ENCODE measurements at regions of chr5 and their contacts with region 1.

Region 1: GRCh38 chr5:154445422-154446182 is at the start of gene SAP30L:
- DNase-seq: peak; percentile 96
- H3K4me3 ChIP-seq: peak within 1 kb of the TSS; percentile 78
- H3K27ac ChIP-seq: peak within 1 kb of the TSS; percentile 18
- H3K4me1 ChIP-seq: peaks cover 15% of the 10 kb centered on the region
- CTCF ChIP-seq: no peak
- total RNA-seq, gene SAP30L: 33.2 and 38.7 TPM in 2 replicates

Region 2: DNA sequence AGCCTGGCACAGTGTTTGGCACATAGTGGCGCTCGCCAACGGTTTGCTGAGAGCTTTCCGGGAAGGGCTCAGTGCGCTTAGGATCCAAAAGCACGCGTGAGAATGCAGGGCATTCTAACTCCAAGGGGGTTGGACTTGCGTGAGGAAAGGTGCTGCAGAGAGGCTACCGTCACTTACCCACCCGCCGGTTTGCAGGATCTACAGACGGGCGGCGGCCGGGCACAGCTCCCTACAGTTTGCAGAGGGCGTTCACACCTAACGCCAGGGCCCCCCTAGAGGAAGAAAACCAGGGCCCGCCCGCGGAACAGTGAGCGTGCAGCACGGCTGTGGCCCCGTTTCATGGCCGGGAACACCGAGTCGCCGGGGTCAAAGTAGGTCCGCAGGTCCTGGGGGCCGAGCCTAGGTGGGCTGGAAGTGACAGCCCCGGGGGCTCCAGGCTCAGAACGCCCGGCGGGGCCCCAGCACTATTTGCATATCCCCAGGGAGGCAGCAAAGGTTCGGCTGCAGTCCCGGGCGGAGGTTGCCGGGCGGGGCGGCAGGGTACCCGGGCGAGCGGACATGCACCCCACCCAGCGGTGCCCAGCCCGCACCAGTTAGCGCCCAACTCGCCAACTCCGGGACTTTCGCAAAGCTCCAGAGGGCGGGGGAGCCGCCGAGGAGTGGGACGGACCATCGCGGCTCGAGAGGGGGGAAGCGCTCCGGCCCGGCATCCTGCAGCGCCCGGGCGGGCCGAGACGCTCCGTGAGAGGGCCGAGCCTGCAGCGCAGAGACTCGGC is 255.6 kb before region 1 on chr5:
- CTCF ChIA-PET with region 1: interaction called, 3 read pairs
- POLR2A ChIA-PET with region 1: no interaction called
- intact Hi-C with region 1: loop called (anchors 1 kb)
- DNase-seq: peak; percentile 90
- H3K4me3 ChIP-seq: peak overlapping the region; percentile 83
- H3K27ac ChIP-seq: peak overlapping the region; percentile 75
- H3K4me1 ChIP-seq: peaks cover 25% of the 10 kb centered on the region
- CTCF ChIP-seq: peak; percentile 73

Region 3: DNA sequence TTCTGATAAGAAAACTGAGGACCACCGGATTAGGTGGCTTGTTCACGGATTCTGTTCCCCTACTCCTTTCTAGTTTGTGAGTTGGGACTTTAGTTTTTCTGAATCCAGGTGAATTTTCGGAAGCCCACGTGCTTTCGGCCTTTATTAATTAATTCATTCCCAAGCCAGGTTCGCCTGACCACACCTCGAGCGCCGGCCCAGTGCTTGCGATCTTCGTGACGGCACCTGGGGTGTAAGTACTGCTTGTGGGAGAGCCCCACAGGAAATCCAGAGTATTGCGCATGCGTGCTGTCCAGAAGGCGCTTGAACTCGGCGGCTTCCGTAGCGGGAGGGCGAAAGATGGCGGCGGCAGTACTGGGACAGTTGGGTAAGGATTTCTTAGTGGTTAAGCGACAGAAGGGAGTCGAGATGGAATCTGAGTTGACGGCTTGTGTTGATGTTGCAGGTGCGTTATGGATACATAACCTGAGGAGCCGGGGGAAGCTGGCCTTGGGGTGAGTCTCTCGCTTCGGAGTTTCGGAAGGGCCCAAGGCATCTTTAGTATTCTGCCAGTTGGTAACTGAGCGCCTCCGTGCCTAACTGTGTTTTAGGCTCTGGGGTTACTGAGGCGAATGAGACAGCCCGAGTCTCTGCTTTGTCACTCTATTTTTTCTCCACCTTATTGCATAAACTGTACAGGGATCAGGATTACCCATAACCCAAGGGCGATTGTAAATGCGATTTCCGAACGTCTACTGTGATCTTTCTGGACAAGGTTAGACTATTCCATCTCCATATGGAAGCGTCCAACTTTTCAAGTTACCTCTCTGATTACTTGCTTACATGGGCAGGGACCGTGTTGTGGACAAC is 495.4 kb after region 1 on chr5 and contains the start of gene MRPL22:
- CTCF ChIA-PET with region 1: no interaction called
- POLR2A ChIA-PET with region 1: no interaction called
- intact Hi-C with region 1: loop called (anchors 5 kb)
- DNase-seq: peak; percentile 94
- H3K4me3 ChIP-seq: peak within 1 kb of the TSS; percentile 95
- H3K27ac ChIP-seq: peak within 1 kb of the TSS; percentile 72
- H3K4me1 ChIP-seq: peaks cover 47% of the 10 kb centered on the region
- CTCF ChIP-seq: no peak
- total RNA-seq, gene MRPL22: 34.0 and 48.9 TPM in 2 replicates

Measured in OCI-LY7 (cell line).